ENCODE measurements at regions of chr11 and their contacts with region 1.

Region 1: GRCh38 chr11:115504276-115505158 is at the start of gene CADM1:
- DNase-seq: peak; percentile 82 to 95
- H3K4me3 ChIP-seq: peak within 1 kb of the TSS; percentile 56 to 62
- H3K27ac ChIP-seq: peak within 1 kb of the TSS; percentile 50 to 74
- H3K4me1 ChIP-seq: peaks cover 5 to 26% (median 20%) of the 10 kb centered on the region in 4 donors
- H3K27me3 ChIP-seq: peaks cover 0 to 28% of the 10 kb centered on the region in 2 donors
- CTCF ChIP-seq: peak; percentile 50 to 60

Region 2: DNA sequence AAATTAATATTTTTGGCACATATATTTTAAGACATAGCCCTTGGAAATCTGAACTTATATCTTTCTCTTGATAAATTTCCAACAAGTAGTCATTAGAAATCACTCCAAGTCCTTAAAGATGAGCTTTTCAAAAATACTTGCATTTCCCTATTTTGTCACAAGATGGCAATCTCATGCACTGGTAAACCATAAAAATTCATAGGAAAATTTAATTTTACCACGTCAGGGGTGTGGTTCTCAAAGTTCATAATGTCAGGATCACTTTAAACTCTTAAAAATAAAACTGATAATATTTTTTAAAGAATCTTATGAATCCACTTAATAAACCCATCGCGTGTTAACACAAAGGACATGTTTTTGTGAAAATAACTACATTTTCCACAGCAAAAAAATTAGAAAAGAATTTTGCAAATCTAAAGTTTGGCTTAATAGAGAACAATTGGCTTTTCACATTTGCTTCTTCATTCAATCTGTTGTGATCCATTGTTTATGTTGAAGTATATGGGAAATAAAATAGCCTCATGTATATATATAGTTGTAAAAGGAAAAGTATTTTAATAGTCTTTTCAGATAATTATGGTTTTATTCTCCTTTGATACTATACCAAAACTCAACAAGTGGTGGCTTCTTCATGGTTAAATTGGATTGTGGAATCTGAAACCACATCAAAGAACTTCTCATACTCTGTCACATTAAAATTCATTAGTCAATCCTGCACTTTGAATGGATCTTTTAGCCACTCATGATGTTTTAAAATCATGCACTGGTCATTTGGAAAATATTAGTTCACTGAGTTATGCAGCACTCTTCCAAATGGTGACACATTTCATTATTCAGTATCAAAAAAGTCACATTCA is 169.4 kb before region 1 on chr11:
- intact Hi-C with region 1: loop called (anchors 5 kb)
- DNase-seq: no peak
- H3K4me3 ChIP-seq: no peak overlapping the region
- H3K27ac ChIP-seq: no peak overlapping the region
- H3K4me1 ChIP-seq: no peaks in the 10 kb centered on the region
- H3K27me3 ChIP-seq: peaks cover 0 to 2% of the 10 kb centered on the region in 2 donors
- CTCF ChIP-seq: peak; percentile 58 to 64

Region 3: GRCh38 chr11:115623021-115623451 is 118.5 kb after region 1 on chr11:
- intact Hi-C with region 1: loop called (anchors 10 kb)
- DNase-seq: peak; percentile 67 to 90
- H3K4me3 ChIP-seq: no peak overlapping the region
- H3K27ac ChIP-seq: peak overlapping the region; percentile 6 to 21
- H3K4me1 ChIP-seq: peaks cover 0 to 20% (median 14%) of the 10 kb centered on the region in 4 donors
- H3K27me3 ChIP-seq: no peaks in the 10 kb centered on the region
- CTCF ChIP-seq: no peak

Measured in tibial artery (tissue), 4 donors.